Adrenal gland (tissue), 19 donors: ENCODE measurements at regions of chr1 and their contacts with region 1.

Region 1: DNA sequence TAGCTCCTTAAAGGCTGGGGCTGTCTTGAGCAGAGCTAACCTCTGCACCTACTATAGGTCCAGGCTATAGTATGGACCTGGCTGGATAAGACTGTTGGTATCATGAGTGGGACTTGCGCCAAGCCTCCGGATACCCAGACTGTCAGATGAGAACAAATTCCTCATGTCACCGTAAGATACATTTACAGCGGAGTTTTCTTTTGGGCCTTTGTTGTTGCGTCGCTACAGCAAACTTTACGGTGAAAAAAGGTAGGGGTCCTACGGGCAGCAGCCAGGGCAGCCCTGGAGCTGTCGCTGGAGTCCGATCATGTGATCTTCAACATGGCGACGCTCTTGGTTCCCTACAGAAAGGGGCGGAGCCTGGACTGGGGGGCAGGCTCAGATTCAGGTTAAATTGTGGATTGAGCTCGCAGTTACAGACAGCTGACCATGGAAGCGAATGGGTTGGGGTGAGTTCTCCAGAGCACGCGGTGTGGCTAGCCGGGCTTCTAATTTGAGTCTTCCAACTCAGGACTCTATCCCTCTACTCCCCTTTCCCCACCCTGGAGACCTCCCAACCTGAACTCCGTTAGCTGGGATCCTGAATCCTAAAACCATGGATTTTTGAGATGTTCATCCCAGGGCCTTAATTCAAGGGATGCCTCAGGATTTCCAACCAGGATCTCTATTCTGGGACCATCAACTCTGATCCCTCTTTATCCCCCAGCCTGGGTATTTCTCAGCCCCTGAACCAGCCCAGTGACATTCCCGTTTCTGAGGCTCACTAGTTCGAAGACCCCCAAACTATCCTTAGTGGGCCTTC is at the start of gene UROD:
- DNase-seq: peak; percentile 91 to 97 (median 95)
- H3K4me3 ChIP-seq: peak within 1 kb of the TSS; percentile 36 to 88 (median 75)
- H3K27ac ChIP-seq: peak within 1 kb of the TSS; percentile 83 to 94 (median 92)
- H3K4me1 ChIP-seq: peaks cover 38 to 49% of the 10 kb centered on the region in 2 donors
- H3K27me3 ChIP-seq: no peaks in the 10 kb centered on the region
- CTCF ChIP-seq: no peak
- POLR2A ChIP-seq: peak; percentile 23 to 79
- total RNA-seq, gene UROD: 169 to 324 (median 220) TPM

Region 2: GRCh38 chr1:44835738-44836675 is 176.0 kb before region 1 on chr1:
- intact Hi-C with region 1: loop called in 1 of 2 experiments (anchors 5 kb)
- DNase-seq: peak; percentile 88 to 95 (median 91)
- H3K4me3 ChIP-seq: no peak overlapping the region
- H3K27ac ChIP-seq: no peak overlapping the region
- H3K4me1 ChIP-seq: peaks cover 0 to 12% of the 10 kb centered on the region in 2 donors
- H3K27me3 ChIP-seq: no peaks in the 10 kb centered on the region
- CTCF ChIP-seq: peak; percentile 70 to 88 (median 83)
- POLR2A ChIP-seq: no peak

Region 3: GRCh38 chr1:45065083-45065482 is 53.0 kb after region 1 on chr1:
- intact Hi-C with region 1: no loop called
- DNase-seq: no peak
- H3K4me3 ChIP-seq: no peak overlapping the region
- H3K27ac ChIP-seq: no peak overlapping the region
- H3K4me1 ChIP-seq: no peaks in the 10 kb centered on the region
- H3K27me3 ChIP-seq: no peaks in the 10 kb centered on the region
- CTCF ChIP-seq: no peak
- POLR2A ChIP-seq: no peak

Region 4: DNA sequence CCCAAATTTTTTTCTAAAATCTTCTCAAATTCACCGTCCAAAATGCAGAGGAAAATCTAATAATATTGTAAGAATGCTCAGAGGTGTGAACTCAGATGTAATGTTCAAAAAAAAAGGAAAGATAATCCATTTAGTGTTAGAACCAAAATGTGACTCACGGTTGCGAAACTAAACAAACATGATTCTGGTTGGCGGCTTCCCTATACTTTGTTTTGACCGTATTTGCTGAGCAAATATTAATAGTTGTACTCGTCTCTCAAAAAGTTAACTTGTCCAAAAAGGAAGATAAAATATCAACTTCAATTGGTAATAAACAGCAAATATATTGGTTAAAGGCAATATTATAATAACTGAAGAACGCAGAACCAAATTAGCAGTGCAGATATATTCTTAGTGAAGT is 160.0 kb after region 1 on chr1:
- intact Hi-C with region 1: no loop called
- DNase-seq: no peak
- H3K4me3 ChIP-seq: no peak overlapping the region
- H3K27ac ChIP-seq: no peak overlapping the region
- H3K4me1 ChIP-seq: peaks cover 0 to 23% of the 10 kb centered on the region in 2 donors
- H3K27me3 ChIP-seq: no peaks in the 10 kb centered on the region
- CTCF ChIP-seq: no peak
- POLR2A ChIP-seq: no peak

Region 5: GRCh38 chr1:45490626-45491486 is 478.8 kb after region 1 on chr1 and contains the start of gene TESK2:
- intact Hi-C with region 1: loop called in 1 of 2 experiments (anchors 10 kb)
- DNase-seq: peak; percentile 98 to 100 (median 99)
- H3K4me3 ChIP-seq: peak within 1 kb of the TSS; percentile 49 to 90 (median 72)
- H3K27ac ChIP-seq: peak within 1 kb of the TSS in 4 of 5 donors; percentile 45 to 87 (median 74)
- H3K4me1 ChIP-seq: peaks cover 6 to 12% of the 10 kb centered on the region in 2 donors
- H3K27me3 ChIP-seq: no peaks in the 10 kb centered on the region
- CTCF ChIP-seq: peak in 4 of 6 experiments; percentile 24 to 47 (median 38)
- POLR2A ChIP-seq: peak; percentile 52 to 93
- total RNA-seq, gene TESK2: 1.1 to 21.4 (median 4.2) TPM